K562 (cell line): ENCODE measurements at regions of chr14 and their contacts with region 1.

Region 1: DNA sequence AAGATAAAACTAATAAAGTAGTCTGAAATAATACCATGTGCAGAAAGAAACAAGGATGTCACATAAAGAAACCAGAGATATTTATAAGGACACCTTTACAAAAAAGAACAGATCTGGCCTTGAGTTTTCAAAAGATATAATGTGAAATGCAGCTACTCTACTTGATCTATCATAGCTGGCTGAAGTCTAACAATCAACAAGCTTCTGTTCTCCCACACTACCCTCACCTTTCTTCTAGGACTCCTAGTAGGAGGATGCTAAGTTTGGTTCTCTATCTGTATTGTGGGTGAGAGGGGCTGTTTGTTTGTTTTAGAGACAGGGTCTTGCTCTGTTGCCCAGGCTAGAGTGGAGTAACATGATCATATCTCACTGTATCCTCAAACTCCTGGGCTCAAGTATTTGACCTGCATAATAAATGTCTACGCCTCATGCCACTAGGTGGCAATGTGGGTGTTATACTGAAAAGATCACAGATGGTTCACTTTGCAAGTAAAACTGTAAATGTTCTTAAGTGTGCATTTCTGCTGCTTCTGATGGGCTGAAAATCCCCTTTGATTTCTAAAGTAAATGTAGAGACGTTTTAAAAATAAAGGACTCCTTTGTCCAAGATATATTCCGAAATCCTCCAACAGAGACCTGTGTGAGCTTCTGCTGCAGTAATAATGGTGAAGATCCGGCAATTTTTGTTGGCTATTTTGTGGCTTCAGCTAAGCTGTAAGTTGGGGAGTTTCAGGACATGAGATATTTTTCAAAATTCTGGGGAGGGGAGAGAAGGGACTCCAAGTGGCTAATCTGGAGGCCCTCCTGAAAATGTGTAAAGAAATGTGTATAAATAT is 269.3 kb downstream of the DAD1 start:
- DNase-seq: peak in 2 of 4 experiments; percentile 20 to 53
- ATAC-seq: peak; percentile 79
- H3K4me3 ChIP-seq: no peak overlapping the region
- H3K27ac ChIP-seq: no peak overlapping the region
- H3K4me1 ChIP-seq: no peaks in the 10 kb centered on the region
- H3K27me3 ChIP-seq: no peaks in the 10 kb centered on the region
- CTCF ChIP-seq: peak; percentile 51 to 68 (median 56); a peak in 5 of 6 replicates
- EP300 ChIP-seq: no peak
- POLR2A ChIP-seq: no peak
- RAD21 ChIP-seq: peak; percentile 56 to 83

Region 2: GRCh38 chr14:22344673-22345072 is 24.9 kb after region 1 on chr14:
- CTCF ChIA-PET with region 1: no interaction called
- POLR2A ChIA-PET with region 1: no interaction called
- in situ Hi-C with region 1: no loop called
- intact Hi-C with region 1: no loop called
- DNase-seq: no peak
- ATAC-seq: no peak
- H3K4me3 ChIP-seq: no peak overlapping the region
- H3K27ac ChIP-seq: no peak overlapping the region
- H3K4me1 ChIP-seq: no peaks in the 10 kb centered on the region
- H3K27me3 ChIP-seq: no peaks in the 10 kb centered on the region
- CTCF ChIP-seq: no peak
- EP300 ChIP-seq: no peak
- POLR2A ChIP-seq: no peak
- RAD21 ChIP-seq: no peak

Region 3: GRCh38 chr14:22375321-22375930 is 55.7 kb after region 1 on chr14:
- CTCF ChIA-PET with region 1: interaction called, 44 read pairs
- POLR2A ChIA-PET with region 1: no interaction called
- in situ Hi-C with region 1: loop called (anchors 5 kb)
- intact Hi-C with region 1: loop called (anchors 1 kb)
- DNase-seq: peak; percentile 16 to 49 (median 24)
- ATAC-seq: peak; percentile 63; the same call in 2 of the 3 replicates
- H3K4me3 ChIP-seq: no peak overlapping the region
- H3K27ac ChIP-seq: no peak overlapping the region
- H3K4me1 ChIP-seq: no peaks in the 10 kb centered on the region
- H3K27me3 ChIP-seq: no peaks in the 10 kb centered on the region
- CTCF ChIP-seq: peak; percentile 40 to 77 (median 48); a peak in 5 of 6 replicates
- EP300 ChIP-seq: no peak
- POLR2A ChIP-seq: no peak
- RAD21 ChIP-seq: peak; percentile 76 to 94

Region 4: GRCh38 chr14:22386924-22387775 is 67.4 kb after region 1 on chr14:
- CTCF ChIA-PET with region 1: no interaction called
- POLR2A ChIA-PET with region 1: no interaction called
- in situ Hi-C with region 1: loop called (anchors 5 kb)
- intact Hi-C with region 1: no loop called
- DNase-seq: peak; percentile 55 to 78 (median 60)
- ATAC-seq: peak; percentile 77
- H3K4me3 ChIP-seq: no peak overlapping the region
- H3K27ac ChIP-seq: no peak overlapping the region
- H3K4me1 ChIP-seq: no peaks in the 10 kb centered on the region
- H3K27me3 ChIP-seq: peaks cover 8 to 19% of the 10 kb centered on the region in 2 experiments; a peak in 3 of 5 replicates
- CTCF ChIP-seq: peak; percentile 66 to 77 (median 69)
- EP300 ChIP-seq: no peak
- POLR2A ChIP-seq: no peak
- RAD21 ChIP-seq: peak; percentile 70 to 85

Region 5: GRCh38 chr14:22589096-22589839 is 269.5 kb after region 1 on chr14 and contains the start of gene DAD1:
- CTCF ChIA-PET with region 1: no interaction called
- POLR2A ChIA-PET with region 1: no interaction called
- in situ Hi-C with region 1: no loop called
- intact Hi-C with region 1: no loop called
- DNase-seq: peak; percentile 96 to 99 (median 97)
- ATAC-seq: peak; percentile 96
- H3K4me3 ChIP-seq: peak within 1 kb of the TSS; percentile 65
- H3K27ac ChIP-seq: peak within 1 kb of the TSS; percentile 87
- H3K4me1 ChIP-seq: peaks cover 9 to 30% of the 10 kb centered on the region in 2 experiments
- H3K27me3 ChIP-seq: no peaks in the 10 kb centered on the region
- CTCF ChIP-seq: no peak
- EP300 ChIP-seq: no peak; the same call in 1 of the 2 replicates
- POLR2A ChIP-seq: peak; percentile 91
- RAD21 ChIP-seq: 0 out of 4 replicates have a peak, but pooled peaks of 1 of the 2 experiments have one; percentile 6
- polyA plus RNA-seq, gene DAD1: 585 to 617 TPM